HCT116 (cell line): ENCODE measurements at regions of chr14 and their contacts with region 1.

Region 1: GRCh38 chr14:64303471-64303917 is 9.3 kb upstream of the ESR2 start:
- DNase-seq: peak; percentile 74
- ATAC-seq: peak; percentile 95
- H3K4me3 ChIP-seq: no peak overlapping the region
- H3K27ac ChIP-seq: no peak overlapping the region
- H3K4me1 ChIP-seq: no peaks in the 10 kb centered on the region
- H3K27me3 ChIP-seq: no peaks in the 10 kb centered on the region
- CTCF ChIP-seq: peak; percentile 71 to 91 (median 86)
- POLR2A ChIP-seq: no peak
- RAD21 ChIP-seq: peak; percentile 92

Region 2: DNA sequence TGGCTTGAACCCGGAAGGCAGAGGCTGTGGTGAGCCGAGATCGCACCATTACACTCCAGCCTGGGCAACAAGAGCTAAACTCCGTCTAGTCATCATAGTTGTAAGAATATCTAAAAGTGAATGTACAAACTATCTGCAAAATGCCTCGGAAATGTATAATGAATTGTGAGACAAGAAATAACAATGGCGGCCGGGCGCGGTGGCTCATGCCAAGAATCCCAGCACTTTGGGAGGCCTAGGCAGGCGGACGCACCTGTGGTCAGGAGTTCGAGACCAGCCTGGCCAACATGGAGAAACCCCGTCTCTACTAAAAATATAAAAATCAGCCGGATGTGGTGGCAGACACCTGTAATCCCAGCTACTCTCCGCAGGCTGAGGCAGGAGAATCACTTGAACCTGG is 770.0 kb before region 1 on chr14:
- CTCF ChIA-PET with region 1: no interaction called
- POLR2A ChIA-PET with region 1: no interaction called
- RAD21 ChIA-PET with region 1: interaction called in 1 of 2 experiments, 10 read pairs
- intact Hi-C with region 1: no loop called
- DNase-seq: no peak
- ATAC-seq: no peak
- H3K4me3 ChIP-seq: no peak overlapping the region
- H3K27ac ChIP-seq: no peak overlapping the region
- H3K4me1 ChIP-seq: no peaks in the 10 kb centered on the region
- H3K27me3 ChIP-seq: no peaks in the 10 kb centered on the region
- CTCF ChIP-seq: no peak
- POLR2A ChIP-seq: no peak
- RAD21 ChIP-seq: no peak

Region 3: DNA sequence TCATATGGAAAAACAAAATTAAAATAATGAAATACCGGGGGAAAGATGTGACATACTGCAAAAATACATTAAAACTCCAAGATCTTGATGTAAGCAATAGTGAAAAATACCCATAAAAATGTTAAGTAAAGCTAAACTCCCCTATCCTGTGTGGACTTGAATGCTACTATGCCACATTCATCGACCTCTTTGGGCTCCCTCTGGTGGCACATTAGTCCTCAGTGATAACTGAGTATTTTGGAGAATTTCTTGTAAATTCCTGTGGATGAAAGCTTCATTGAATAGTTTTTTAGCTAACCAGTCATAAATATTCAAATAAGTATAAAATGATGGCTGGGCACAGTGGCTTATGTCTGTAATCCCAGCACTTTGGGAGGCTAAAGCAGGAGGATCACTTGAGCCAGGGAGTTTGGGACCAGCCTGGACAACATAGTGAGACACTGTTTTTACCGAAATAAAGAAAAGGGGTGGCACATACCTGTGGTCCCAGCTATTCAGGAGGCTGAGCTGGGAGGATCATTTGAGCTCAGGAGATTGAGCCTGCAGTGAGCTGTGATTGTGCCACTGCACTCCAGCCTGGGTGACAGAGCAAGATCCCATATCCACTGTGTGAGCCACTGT is 533.2 kb before region 1 on chr14:
- CTCF ChIA-PET with region 1: interaction called, 13 read pairs
- POLR2A ChIA-PET with region 1: no interaction called
- RAD21 ChIA-PET with region 1: no interaction called
- intact Hi-C with region 1: no loop called
- DNase-seq: peak; percentile 36
- ATAC-seq: peak; percentile 93
- H3K4me3 ChIP-seq: no peak overlapping the region
- H3K27ac ChIP-seq: no peak overlapping the region
- H3K4me1 ChIP-seq: peaks cover 2 to 6% of the 10 kb centered on the region in 2 experiments; a peak in 3 of 4 replicates
- H3K27me3 ChIP-seq: no peaks in the 10 kb centered on the region
- CTCF ChIP-seq: peak; percentile 60 to 78 (median 65); a peak in 5 of 6 replicates
- POLR2A ChIP-seq: no peak
- RAD21 ChIP-seq: peak; percentile 78

Region 4: DNA sequence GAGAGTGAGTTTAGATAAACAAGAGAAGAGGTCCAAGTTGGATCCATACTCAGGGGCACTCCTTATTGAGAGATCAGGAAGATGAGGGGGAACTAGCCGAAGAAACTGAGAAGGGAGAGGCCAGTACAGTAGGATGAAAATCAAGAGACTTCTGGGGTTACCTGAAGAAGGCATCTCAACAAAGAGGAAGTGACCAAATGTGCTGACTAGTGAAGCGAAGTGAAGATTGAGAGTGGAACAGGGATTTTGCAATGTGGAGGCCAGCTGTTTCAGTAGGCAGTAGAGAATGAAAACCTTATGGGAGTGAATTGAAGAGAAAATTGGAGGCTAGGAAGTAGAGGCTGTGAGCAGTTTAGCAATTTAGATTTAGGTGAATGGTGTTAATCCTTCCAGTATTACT is 297.7 kb before region 1 on chr14:
- CTCF ChIA-PET with region 1: interaction called, 29 read pairs
- POLR2A ChIA-PET with region 1: no interaction called
- RAD21 ChIA-PET with region 1: interaction called in 1 of 2 experiments, 5 read pairs
- intact Hi-C with region 1: loop called (anchors 1 kb)
- DNase-seq: no peak
- ATAC-seq: no peak
- H3K4me3 ChIP-seq: no peak overlapping the region
- H3K27ac ChIP-seq: no peak overlapping the region
- H3K4me1 ChIP-seq: no peaks in the 10 kb centered on the region
- H3K27me3 ChIP-seq: no peaks in the 10 kb centered on the region
- CTCF ChIP-seq: no peak
- POLR2A ChIP-seq: no peak
- RAD21 ChIP-seq: no peak

Region 5: GRCh38 chr14:64186231-64187129 is 117.0 kb before region 1 on chr14:
- CTCF ChIA-PET with region 1: no interaction called
- POLR2A ChIA-PET with region 1: no interaction called
- RAD21 ChIA-PET with region 1: no interaction called
- intact Hi-C with region 1: no loop called
- DNase-seq: no peak
- ATAC-seq: no peak
- H3K4me3 ChIP-seq: no peak overlapping the region
- H3K27ac ChIP-seq: no peak overlapping the region
- H3K4me1 ChIP-seq: no peaks in the 10 kb centered on the region
- H3K27me3 ChIP-seq: no peaks in the 10 kb centered on the region
- CTCF ChIP-seq: no peak
- POLR2A ChIP-seq: no peak
- RAD21 ChIP-seq: no peak

Region 6: DNA sequence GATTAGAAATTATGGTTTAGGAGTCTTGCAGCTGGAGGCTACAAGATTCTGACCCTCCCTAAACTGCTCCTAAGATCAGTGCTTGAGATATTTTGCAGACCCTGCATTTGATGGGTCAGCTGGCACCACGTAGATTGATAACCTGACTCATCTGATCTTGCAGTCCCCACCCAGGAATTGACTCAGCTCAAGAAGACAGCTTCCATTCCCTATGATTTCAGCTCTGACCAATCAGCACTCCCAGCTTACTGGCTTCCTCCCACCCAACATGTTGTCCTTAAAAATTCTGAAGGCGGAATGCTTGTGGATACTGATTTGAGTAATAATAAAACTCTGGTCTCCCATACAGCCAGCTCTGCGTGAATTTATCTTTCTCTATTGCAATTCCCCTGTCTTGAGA is 61.4 kb after region 1 on chr14:
- CTCF ChIA-PET with region 1: no interaction called
- POLR2A ChIA-PET with region 1: no interaction called
- RAD21 ChIA-PET with region 1: no interaction called
- intact Hi-C with region 1: no loop called
- DNase-seq: no peak
- ATAC-seq: peak; percentile 38
- H3K4me3 ChIP-seq: no peak overlapping the region
- H3K27ac ChIP-seq: no peak overlapping the region
- H3K4me1 ChIP-seq: peaks cover 11 to 27% of the 10 kb centered on the region in 2 experiments; a peak in 3 of 4 replicates
- H3K27me3 ChIP-seq: no peaks in the 10 kb centered on the region
- CTCF ChIP-seq: no peak
- POLR2A ChIP-seq: no peak
- RAD21 ChIP-seq: no peak

Region 7: DNA sequence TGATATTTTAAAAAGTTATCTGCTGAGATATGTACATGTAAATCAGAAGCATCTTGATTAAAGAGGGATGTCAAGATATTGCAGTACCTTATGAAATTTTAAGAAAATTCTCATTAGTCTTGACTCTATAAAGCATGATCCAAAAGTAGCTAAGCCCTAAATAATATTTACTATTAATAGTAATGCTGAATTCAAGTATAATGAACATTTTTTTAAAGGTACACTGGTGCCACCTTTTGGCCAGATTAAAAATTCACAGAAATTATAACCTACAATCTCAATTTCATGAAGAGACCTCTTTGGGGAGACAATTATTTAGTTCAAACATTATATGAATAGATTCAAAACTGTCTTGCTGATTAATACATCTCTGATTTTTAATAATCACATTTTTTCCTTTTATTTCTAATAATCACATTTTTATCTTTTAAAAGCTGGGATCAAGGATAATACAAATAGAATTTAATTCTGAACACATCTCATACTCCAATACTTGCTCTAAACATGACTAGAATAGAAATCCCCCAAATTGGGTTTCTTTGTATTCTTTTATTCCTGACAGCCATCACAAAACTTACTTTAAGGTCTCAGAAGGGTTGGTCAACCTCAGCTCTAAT is 175.2 kb after region 1 on chr14:
- CTCF ChIA-PET with region 1: interaction called, 15 read pairs
- POLR2A ChIA-PET with region 1: no interaction called
- RAD21 ChIA-PET with region 1: no interaction called
- intact Hi-C with region 1: no loop called
- DNase-seq: no peak
- ATAC-seq: no peak
- H3K4me3 ChIP-seq: no peak overlapping the region
- H3K27ac ChIP-seq: no peak overlapping the region
- H3K4me1 ChIP-seq: no peaks in the 10 kb centered on the region
- H3K27me3 ChIP-seq: no peaks in the 10 kb centered on the region
- CTCF ChIP-seq: peak; percentile 21 to 38 (median 30); a peak in 3 of 6 replicates
- POLR2A ChIP-seq: no peak
- RAD21 ChIP-seq: peak; percentile 55